Common myeloid progenitor, CD34-positive (primary cell): ENCODE measurements at regions of chr12 and their contacts with region 1.

Region 1: GRCh38 chr12:49110464-49111155 is at the start of gene LMBR1L:
- DNase-seq: peak; percentile 99
- H3K4me3 ChIP-seq: peak within 1 kb of the TSS; percentile 73 to 98 (median 90)
- H3K27ac ChIP-seq: peak within 1 kb of the TSS; percentile 72 to 89
- H3K4me1 ChIP-seq: peaks cover 4 to 23% (median 20%) of the 10 kb centered on the region in 4 experiments
- H3K27me3 ChIP-seq: no peaks in the 10 kb centered on the region

Region 2: GRCh38 chr12:49069507-49070346 is 40.9 kb before region 1 on chr12 and contains the start of gene RHEBL1:
- CTCF ChIA-PET with region 1: interaction called, 326 read pairs
- POLR2A ChIA-PET with region 1: no interaction called
- DNase-seq: peak; percentile 98 to 99 (median 99)
- H3K4me3 ChIP-seq: peak within 1 kb of the TSS; percentile 62 to 97 (median 88)
- H3K27ac ChIP-seq: peak within 1 kb of the TSS in 1 of 2 experiments; percentile 75
- H3K4me1 ChIP-seq: peaks cover 3 to 27% (median 12%) of the 10 kb centered on the region in 4 experiments
- H3K27me3 ChIP-seq: no peaks in the 10 kb centered on the region

Region 3: DNA sequence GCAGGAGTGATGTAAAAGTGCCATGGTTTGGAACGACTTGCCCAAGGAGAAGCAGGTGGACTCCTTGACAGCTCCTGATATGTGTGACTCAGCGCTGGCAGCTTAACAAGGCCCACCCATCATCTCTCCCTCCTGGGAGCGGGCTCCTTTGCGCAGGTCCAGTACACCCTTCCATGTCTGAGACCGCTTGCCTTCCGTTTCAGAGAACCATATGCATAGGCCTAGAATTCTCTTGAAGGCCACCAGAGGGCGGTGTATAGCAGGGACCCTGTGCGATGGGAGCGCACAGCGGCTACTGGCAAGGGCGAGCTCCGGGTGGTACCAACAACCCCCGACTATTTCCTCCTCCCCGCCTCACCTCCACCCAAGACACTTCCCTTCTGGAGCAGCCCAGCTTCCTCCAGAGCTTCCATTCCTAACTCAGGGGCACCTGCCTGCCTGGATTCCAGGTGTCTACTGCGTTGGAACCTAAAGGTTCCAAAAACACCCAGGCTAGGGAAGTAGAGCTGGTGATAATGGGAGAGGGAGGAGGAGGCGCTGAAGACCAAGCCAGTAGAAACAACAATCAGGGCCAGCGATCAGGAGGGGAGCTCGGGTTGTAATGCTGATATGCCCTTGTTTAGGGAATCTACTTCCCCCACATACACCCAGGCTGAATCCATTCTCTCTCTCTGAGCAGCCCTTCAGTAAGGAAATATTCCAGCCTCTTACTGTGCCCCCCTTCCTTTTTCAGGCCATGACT is 22.2 kb before region 1 on chr12:
- CTCF ChIA-PET with region 1: interaction called, 198 read pairs
- POLR2A ChIA-PET with region 1: no interaction called
- DNase-seq: peak; percentile 87 to 91 (median 90)
- H3K4me3 ChIP-seq: peak overlapping the region in 6 of 7 experiments; percentile 1 to 60 (median 35)
- H3K27ac ChIP-seq: no peak overlapping the region
- H3K4me1 ChIP-seq: peaks cover 11 to 51% (median 44%) of the 10 kb centered on the region in 4 experiments
- H3K27me3 ChIP-seq: peaks cover 13 to 50% (median 23%) of the 10 kb centered on the region in 5 experiments

Region 4: DNA sequence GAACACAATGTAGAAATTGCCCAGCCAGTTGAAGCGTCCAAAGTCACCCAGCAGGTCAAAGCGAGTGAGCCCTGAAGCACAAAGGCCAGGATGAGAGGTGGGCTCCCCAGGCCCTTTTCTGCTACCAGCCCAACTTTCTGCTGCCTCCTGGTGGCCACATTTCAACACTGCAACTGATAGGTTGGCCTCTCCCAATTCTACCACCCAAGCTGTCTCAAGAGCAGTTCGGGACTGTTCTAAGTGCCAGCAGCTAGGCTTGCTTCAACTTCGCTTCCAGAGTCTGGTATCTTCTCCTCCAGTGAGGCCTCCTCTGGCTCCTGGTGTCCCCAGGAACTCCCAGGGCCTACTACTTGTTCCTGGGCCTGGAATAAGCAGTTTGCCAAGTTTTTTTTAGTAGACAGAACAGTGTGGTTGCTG is 12.6 kb before region 1 on chr12:
- CTCF ChIA-PET with region 1: interaction called, 188 read pairs
- POLR2A ChIA-PET with region 1: interaction called, 7 read pairs
- DNase-seq: peak; percentile 53 to 76 (median 65)
- H3K4me3 ChIP-seq: no peak overlapping the region
- H3K27ac ChIP-seq: no peak overlapping the region
- H3K4me1 ChIP-seq: peaks cover 0 to 17% (median 12%) of the 10 kb centered on the region in 4 experiments
- H3K27me3 ChIP-seq: peaks cover 5 to 30% (median 16%) of the 10 kb centered on the region in 5 experiments

Region 5: GRCh38 chr12:49121047-49121696 is 10.6 kb after region 1 on chr12:
- CTCF ChIA-PET with region 1: interaction called, 22 read pairs
- POLR2A ChIA-PET with region 1: no interaction called
- DNase-seq: peak in 1 of 3 donors; percentile 19
- H3K4me3 ChIP-seq: no peak overlapping the region
- H3K27ac ChIP-seq: no peak overlapping the region
- H3K4me1 ChIP-seq: no peaks in the 10 kb centered on the region
- H3K27me3 ChIP-seq: no peaks in the 10 kb centered on the region

Region 6: DNA sequence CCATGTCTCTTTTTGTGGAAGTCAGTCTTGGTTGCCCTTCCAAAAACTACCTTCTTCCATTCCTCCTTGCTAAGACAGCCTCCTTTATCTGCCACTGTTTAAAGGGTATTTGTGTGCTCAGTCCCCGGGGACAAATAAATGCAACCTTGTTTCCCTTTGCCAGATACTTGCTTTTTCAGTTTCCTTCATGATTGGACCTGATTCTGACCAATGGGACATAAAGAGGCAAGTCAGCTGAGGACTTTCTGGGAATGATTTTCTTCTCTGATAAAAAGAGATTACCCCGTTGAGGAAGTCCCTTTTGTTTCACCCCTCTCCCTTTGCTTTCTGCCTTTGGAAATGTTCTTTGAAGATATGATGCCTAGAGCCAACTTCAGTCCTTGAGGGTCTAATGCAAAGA is 28.0 kb after region 1 on chr12:
- CTCF ChIA-PET with region 1: no interaction called
- POLR2A ChIA-PET with region 1: no interaction called
- DNase-seq: no peak
- H3K4me3 ChIP-seq: no peak overlapping the region
- H3K27ac ChIP-seq: no peak overlapping the region
- H3K4me1 ChIP-seq: peaks cover 0 to 5% (median 3%) of the 10 kb centered on the region in 4 experiments
- H3K27me3 ChIP-seq: no peaks in the 10 kb centered on the region

Region 7: GRCh38 chr12:49538510-49539403 is 428.1 kb after region 1 on chr12 and contains the start of gene KCNH3:
- CTCF ChIA-PET with region 1: no interaction called
- POLR2A ChIA-PET with region 1: no interaction called
- DNase-seq: peak; percentile 86 to 94 (median 91)
- H3K4me3 ChIP-seq: peak within 1 kb of the TSS in 6 of 7 experiments; percentile 32 to 68 (median 56)
- H3K27ac ChIP-seq: no peak within 1 kb of the TSS
- H3K4me1 ChIP-seq: peaks cover 5 to 32% (median 26%) of the 10 kb centered on the region in 4 experiments
- H3K27me3 ChIP-seq: peaks cover 3 to 74% (median 44%) of the 10 kb centered on the region in 5 experiments